ENCODE measurements at regions of chr15 and their contacts with region 1.

Region 1: DNA sequence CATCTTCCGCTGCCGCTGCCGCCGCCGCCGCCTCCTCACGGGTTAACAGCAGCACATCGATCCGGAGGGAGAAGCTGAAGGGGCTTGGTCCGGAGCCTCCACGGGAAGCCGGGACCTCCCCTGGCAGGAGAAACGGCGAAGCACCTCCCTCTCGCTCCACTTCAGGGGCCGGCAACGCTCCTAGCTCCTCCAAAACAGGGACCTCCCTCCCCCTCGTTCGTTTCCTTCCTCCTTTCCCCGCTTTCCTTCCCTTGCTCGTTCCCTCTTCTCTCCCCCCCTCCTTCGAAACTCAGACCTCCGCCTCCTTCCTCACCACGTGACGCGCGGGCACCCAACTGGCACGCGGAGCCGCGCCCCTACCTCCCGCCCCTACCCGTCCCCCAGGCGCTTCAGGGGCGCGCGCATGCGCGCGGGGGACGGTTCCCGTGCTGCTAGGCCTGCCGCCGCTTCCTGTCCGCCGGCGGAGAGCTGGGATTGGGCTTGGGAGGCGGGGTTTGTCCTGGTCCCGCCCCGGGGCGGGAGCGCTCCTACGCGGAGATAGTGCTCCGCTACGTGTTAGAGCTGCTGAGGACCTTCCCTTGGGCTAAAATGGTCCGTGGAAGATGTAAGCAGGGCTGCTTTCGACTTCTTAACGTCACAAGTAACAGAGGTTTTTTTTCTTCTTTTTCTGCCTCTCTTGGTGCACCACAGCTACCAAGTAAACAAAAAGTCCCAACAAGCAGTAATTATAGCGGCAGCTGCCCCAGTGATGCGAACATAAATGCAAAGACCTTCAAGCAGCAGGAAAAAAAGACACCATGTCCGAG is at the start of gene ADAM10:
- DNase-seq: peak; percentile 100
- total RNA-seq, gene ADAM10: 80.3 to 86.8 TPM

Region 2: GRCh38 chr15:58682234-58682633 is 67.5 kb before region 1 on chr15:
- intact Hi-C with region 1: loop called in 1 of 2 experiments (anchors 2 kb)
- DNase-seq: no peak